Naive thymus-derived CD4-positive, alpha-beta T cell (primary cell): ENCODE measurements at regions of chr17 and their contacts with region 1.

Region 1: GRCh38 chr17:8383143-8383822 is at the start of gene RPL26:
- DNase-seq: peak; percentile 89 to 97 (median 97)
- ATAC-seq: peak; percentile 94
- H3K4me3 ChIP-seq: peak within 1 kb of the TSS; percentile 83
- H3K4me3 Mint-ChIP-seq: peak within 1 kb of the TSS; percentile 93 to 99 (median 97)
- H3K27ac ChIP-seq: peak within 1 kb of the TSS; percentile 82
- H3K27ac Mint-ChIP-seq: peak within 1 kb of the TSS; percentile 93 to 98 (median 96)
- H3K4me1 ChIP-seq: peaks cover 28 to 40% of the 10 kb centered on the region in 2 donors
- H3K4me1 Mint-ChIP-seq: peaks cover 34 to 76% (median 60%) of the 10 kb centered on the region in 7 donors
- H3K27me3 ChIP-seq: no peaks in the 10 kb centered on the region
- H3K27me3 Mint-ChIP-seq: peaks cover 0 to 2% (median 0%) of the 10 kb centered on the region in 5 donors
- total RNA-seq, gene RPL26: 2,029 to 3,298 (median 3,039) TPM

Region 2: DNA sequence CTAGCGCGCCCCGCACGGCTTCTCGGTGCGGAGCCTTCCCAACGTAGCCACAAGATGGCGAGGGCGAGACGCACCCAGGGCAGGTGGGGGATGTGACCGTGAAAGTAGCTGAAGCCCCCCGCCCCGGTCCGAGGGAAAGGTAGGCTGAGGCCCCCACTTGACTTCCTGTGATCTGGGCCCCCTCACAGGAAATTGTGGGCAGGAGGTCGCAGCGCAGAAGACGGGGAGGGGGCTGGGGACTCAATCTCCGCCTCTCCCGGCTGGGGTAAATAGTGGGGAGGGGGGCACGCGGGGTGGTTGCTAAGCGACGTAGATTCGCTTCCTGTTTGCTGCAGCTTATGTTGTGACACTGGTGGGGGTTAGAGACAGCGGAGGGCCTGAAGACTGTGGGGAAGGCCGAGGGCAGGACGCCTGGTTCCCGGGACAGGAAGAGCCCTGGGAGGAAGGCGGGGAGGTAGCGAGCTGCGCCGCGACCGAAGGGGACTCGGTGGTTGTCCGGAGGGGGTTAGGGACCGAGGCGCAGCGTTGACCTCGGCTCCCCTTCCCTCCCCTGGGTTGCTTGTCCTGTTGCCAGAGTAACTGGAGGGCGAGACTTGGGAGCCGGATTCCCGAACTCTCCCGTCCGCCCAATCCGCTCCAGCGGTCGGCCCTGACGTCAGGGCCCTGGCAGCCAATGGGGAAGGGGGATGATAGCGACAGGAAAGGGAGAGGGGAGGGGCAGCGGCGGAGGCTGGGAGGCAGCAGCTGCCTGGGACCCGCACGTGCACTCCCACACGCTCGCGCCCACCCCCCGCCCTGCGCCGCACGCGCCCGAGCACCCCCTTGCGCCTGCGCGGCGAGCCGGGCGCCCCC is 548.1 kb before region 1 on chr17:
- CTCF ChIA-PET with region 1: no interaction called
- POLR2A ChIA-PET with region 1: no interaction called
- intact Hi-C with region 1: loop called (anchors 5 kb)
- DNase-seq: peak; percentile 76 to 97 (median 95)
- ATAC-seq: peak; percentile 70
- H3K4me3 ChIP-seq: peak overlapping the region; percentile 96
- H3K4me3 Mint-ChIP-seq: peak overlapping the region; percentile 91 to 99 (median 96)
- H3K27ac ChIP-seq: peak overlapping the region; percentile 96
- H3K27ac Mint-ChIP-seq: peak overlapping the region; percentile 95 to 100 (median 99)
- H3K4me1 ChIP-seq: peaks cover 29 to 38% of the 10 kb centered on the region in 2 donors
- H3K4me1 Mint-ChIP-seq: peaks cover 28 to 60% (median 44%) of the 10 kb centered on the region in 7 donors
- H3K27me3 ChIP-seq: no peaks in the 10 kb centered on the region
- H3K27me3 Mint-ChIP-seq: peaks cover 0 to 28% (median 0%) of the 10 kb centered on the region in 5 donors

Region 3: GRCh38 chr17:8057691-8058114 is 325.6 kb before region 1 on chr17:
- CTCF ChIA-PET with region 1: no interaction called
- POLR2A ChIA-PET with region 1: no interaction called
- intact Hi-C with region 1: loop called in 1 of 2 experiments (anchors 5 kb)
- DNase-seq: peak in 7 of 9 donors; percentile 49 to 73 (median 64)
- ATAC-seq: peak; percentile 90
- H3K4me3 ChIP-seq: no peak overlapping the region
- H3K4me3 Mint-ChIP-seq: no peak overlapping the region
- H3K27ac ChIP-seq: no peak overlapping the region
- H3K27ac Mint-ChIP-seq: no peak overlapping the region
- H3K4me1 ChIP-seq: no peaks in the 10 kb centered on the region
- H3K4me1 Mint-ChIP-seq: peaks cover 0 to 20% (median 6%) of the 10 kb centered on the region in 7 donors
- H3K27me3 ChIP-seq: peaks cover 0 to 4% of the 10 kb centered on the region in 2 donors
- H3K27me3 Mint-ChIP-seq: peaks cover 34 to 62% (median 44%) of the 10 kb centered on the region in 5 donors

Region 4: GRCh38 chr17:8189711-8190477 is 193.4 kb before region 1 on chr17 and contains the start of gene BORCS6:
- CTCF ChIA-PET with region 1: interaction called, 3 read pairs
- POLR2A ChIA-PET with region 1: no interaction called
- intact Hi-C with region 1: loop called in 1 of 2 experiments (anchors 2 kb)
- DNase-seq: peak; percentile 76 to 97 (median 94)
- ATAC-seq: peak; percentile 81
- H3K4me3 ChIP-seq: peak within 1 kb of the TSS; percentile 91
- H3K4me3 Mint-ChIP-seq: peak within 1 kb of the TSS in 2 of 10 donors; percentile 15 to 49
- H3K27ac ChIP-seq: peak within 1 kb of the TSS; percentile 87
- H3K27ac Mint-ChIP-seq: peak within 1 kb of the TSS in 7 of 9 donors; percentile 46 to 94 (median 88)
- H3K4me1 ChIP-seq: peaks cover 33 to 38% of the 10 kb centered on the region in 2 donors
- H3K4me1 Mint-ChIP-seq: peaks cover 8 to 13% (median 13%) of the 10 kb centered on the region in 7 donors
- H3K27me3 ChIP-seq: no peaks in the 10 kb centered on the region
- H3K27me3 Mint-ChIP-seq: no peaks in the 10 kb centered on the region
- total RNA-seq, gene BORCS6: 5.4 to 16.1 (median 13.4) TPM

Region 5: DNA sequence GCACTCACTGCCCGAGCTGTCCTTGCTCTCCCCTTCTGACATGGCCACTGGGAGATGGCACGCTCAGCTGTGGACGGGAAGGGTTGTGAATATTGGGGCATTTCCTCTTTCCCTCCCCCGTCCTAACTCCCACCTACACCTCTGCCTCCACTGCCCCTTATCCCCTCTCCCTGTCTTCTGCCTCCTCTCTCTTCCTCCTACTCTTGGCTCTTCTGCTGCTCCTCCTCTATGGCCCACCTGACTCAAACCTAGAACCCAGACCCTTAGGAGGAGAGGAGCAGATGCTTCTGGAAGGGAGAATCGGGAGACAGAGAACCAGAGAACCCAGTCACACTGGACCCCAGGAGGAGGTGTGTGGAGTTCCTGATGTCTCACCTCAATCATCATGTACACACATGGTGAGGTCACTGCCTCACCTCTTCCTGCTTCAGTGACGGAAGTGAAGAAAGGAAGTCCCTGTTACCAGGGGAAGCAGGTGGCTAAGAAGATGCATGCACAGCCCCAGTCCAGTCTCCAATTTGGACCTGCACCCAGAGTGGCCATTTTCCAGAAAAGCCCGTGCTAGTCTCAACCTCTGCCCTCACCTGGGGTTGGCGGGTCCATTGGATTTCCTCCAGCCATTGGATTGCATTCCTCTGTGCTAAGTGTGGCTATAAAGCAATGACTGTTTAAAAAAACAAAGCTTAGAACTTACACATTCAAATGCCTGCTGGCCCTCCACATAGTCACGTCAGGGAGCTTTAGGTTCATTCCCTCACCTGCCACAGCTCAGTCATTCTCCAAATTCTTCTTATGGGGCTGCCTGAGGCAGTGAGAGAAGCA is 10.3 kb after region 1 on chr17:
- CTCF ChIA-PET with region 1: interaction called, 7 read pairs
- POLR2A ChIA-PET with region 1: interaction called, 5 read pairs
- intact Hi-C with region 1: loop called in 1 of 2 experiments (anchors 1 kb)
- DNase-seq: peak in 7 of 9 donors; percentile 42 to 65 (median 60)
- ATAC-seq: peak; percentile 95
- H3K4me3 ChIP-seq: no peak overlapping the region
- H3K4me3 Mint-ChIP-seq: peak overlapping the region; percentile 14 to 67 (median 38)
- H3K27ac ChIP-seq: peak overlapping the region; percentile 32
- H3K27ac Mint-ChIP-seq: peak overlapping the region; percentile 73 to 95 (median 88)
- H3K4me1 ChIP-seq: peaks cover 12 to 14% of the 10 kb centered on the region in 2 donors
- H3K4me1 Mint-ChIP-seq: peaks cover 6 to 19% (median 11%) of the 10 kb centered on the region in 7 donors
- H3K27me3 ChIP-seq: no peaks in the 10 kb centered on the region
- H3K27me3 Mint-ChIP-seq: peaks cover 0 to 29% (median 8%) of the 10 kb centered on the region in 5 donors

Region 6: DNA sequence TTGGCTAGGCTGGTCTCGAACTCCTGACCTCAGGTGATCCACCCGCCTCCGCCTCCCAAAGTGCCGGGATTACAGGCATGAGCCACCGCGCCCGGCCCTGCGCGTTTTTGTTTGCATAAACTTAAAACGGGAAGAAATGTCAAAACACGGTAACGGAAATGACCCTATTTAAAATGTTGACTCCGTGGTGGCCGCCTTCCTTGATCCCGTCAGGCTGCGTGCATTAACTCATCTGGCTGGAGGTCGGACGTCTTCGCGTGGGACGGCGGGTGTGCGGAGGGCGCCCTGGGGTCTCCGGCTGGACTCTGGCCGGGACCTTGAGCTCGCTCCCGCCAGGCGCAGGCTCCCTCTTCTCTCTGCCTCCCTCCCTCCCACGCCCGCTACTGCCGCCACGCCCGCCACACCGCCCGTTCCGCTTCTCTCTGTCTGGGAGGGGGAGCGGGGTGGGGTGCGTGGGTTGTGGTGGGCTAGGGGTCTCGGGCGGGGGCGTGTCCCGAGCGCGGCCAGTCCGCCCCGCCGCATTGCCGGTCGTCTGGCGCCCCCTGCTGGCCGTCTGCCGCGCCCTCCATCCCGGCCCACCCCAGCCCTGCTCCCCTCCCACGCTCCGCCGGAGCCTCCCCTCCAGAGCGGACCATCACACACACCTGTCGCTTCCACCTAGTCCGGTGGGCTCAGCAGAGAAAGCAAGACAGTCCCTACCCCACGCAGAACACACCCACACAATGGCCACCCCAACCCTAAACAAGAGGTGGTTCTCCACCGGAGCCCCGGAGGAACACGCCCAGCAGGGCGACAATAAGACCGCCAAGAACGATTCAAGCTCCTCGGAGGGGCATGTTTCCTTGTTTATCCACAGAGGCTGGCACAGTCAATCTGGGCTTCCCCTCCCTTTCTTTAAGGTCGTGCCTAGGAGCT is 362.6 kb after region 1 on chr17:
- CTCF ChIA-PET with region 1: interaction called, 11 read pairs
- POLR2A ChIA-PET with region 1: interaction called, 7 read pairs
- intact Hi-C with region 1: loop called (anchors 1 kb)
- DNase-seq: peak; percentile 47 to 84 (median 70)
- ATAC-seq: peak; percentile 88
- H3K4me3 ChIP-seq: peak overlapping the region; percentile 80
- H3K4me3 Mint-ChIP-seq: peak overlapping the region; percentile 85 to 94 (median 91)
- H3K27ac ChIP-seq: peak overlapping the region; percentile 67
- H3K27ac Mint-ChIP-seq: peak overlapping the region; percentile 84 to 95 (median 88)
- H3K4me1 ChIP-seq: peaks cover 3 to 21% of the 10 kb centered on the region in 2 donors
- H3K4me1 Mint-ChIP-seq: peaks cover 2 to 34% (median 25%) of the 10 kb centered on the region in 7 donors
- H3K27me3 ChIP-seq: no peaks in the 10 kb centered on the region
- H3K27me3 Mint-ChIP-seq: peaks cover 0 to 21% (median 0%) of the 10 kb centered on the region in 5 donors